ENCODE measurements at regions of chr10 and their contacts with region 1.

Region 1: GRCh38 chr10:124916585-124917427 is 25.1 kb upstream of the ZRANB1 start:
- DNase-seq: peak; percentile 96 to 97 (median 96)
- H3K4me3 ChIP-seq: peak overlapping the region; percentile 73 to 93 (median 86)
- H3K4me3 Mint-ChIP-seq: peak overlapping the region; percentile 72 to 91
- H3K27ac ChIP-seq: peak overlapping the region; percentile 56 to 85
- H3K27ac Mint-ChIP-seq: peak overlapping the region; percentile 82 to 89 (median 85)
- H3K4me1 ChIP-seq: peaks cover 26 to 31% of the 10 kb centered on the region in 2 donors
- H3K4me1 Mint-ChIP-seq: peaks cover 41% of the 10 kb centered on the region
- H3K27me3 ChIP-seq: no peaks in the 10 kb centered on the region
- H3K27me3 Mint-ChIP-seq: peaks cover 0 to 2% (median 0%) of the 10 kb centered on the region in 3 donors
- CTCF ChIP-seq: no peak

Region 2: GRCh38 chr10:124647421-124648130 is 269.2 kb before region 1 on chr10:
- intact Hi-C with region 1: loop called in 1 of 2 experiments (anchors 10 kb)
- DNase-seq: peak; percentile 92 to 95 (median 94)
- H3K4me3 ChIP-seq: peak overlapping the region in 2 of 3 experiments; percentile 10 to 64
- H3K4me3 Mint-ChIP-seq: peak overlapping the region; percentile 52 to 87
- H3K27ac ChIP-seq: peak overlapping the region; percentile 85 to 92
- H3K27ac Mint-ChIP-seq: peak overlapping the region; percentile 95 to 98 (median 96)
- H3K4me1 ChIP-seq: peaks cover 91 to 100% of the 10 kb centered on the region in 2 donors
- H3K4me1 Mint-ChIP-seq: peaks cover 94% of the 10 kb centered on the region
- H3K27me3 ChIP-seq: no peaks in the 10 kb centered on the region
- H3K27me3 Mint-ChIP-seq: no peaks in the 10 kb centered on the region
- CTCF ChIP-seq: peak; percentile 50

Region 3: GRCh38 chr10:124802313-124802675 is 114.5 kb before region 1 on chr10:
- intact Hi-C with region 1: loop called (anchors 10 kb)
- DNase-seq: peak; percentile 72 to 87 (median 74)
- H3K4me3 ChIP-seq: peak overlapping the region; percentile 83 to 95 (median 85)
- H3K4me3 Mint-ChIP-seq: peak overlapping the region; percentile 93 to 95
- H3K27ac ChIP-seq: peak overlapping the region; percentile 96 to 99
- H3K27ac Mint-ChIP-seq: peak overlapping the region; percentile 93 to 98 (median 96)
- H3K4me1 ChIP-seq: peaks cover 14 to 17% of the 10 kb centered on the region in 2 donors
- H3K4me1 Mint-ChIP-seq: peaks cover 9% of the 10 kb centered on the region
- H3K27me3 ChIP-seq: no peaks in the 10 kb centered on the region
- H3K27me3 Mint-ChIP-seq: peaks cover 0 to 12% (median 1%) of the 10 kb centered on the region in 3 donors
- CTCF ChIP-seq: no peak

Region 4: GRCh38 chr10:125060826-125061556 is 144.2 kb after region 1 on chr10:
- intact Hi-C with region 1: loop called in 1 of 2 experiments (anchors 10 kb)
- DNase-seq: peak; percentile 64 to 78 (median 72)
- H3K4me3 ChIP-seq: peak overlapping the region in 1 of 3 experiments; percentile 58
- H3K4me3 Mint-ChIP-seq: peak overlapping the region in 1 of 2 donors; percentile 82
- H3K27ac ChIP-seq: peak overlapping the region; percentile 41 to 62
- H3K27ac Mint-ChIP-seq: peak overlapping the region; percentile 74 to 92 (median 90)
- H3K4me1 ChIP-seq: peaks cover 72 to 87% of the 10 kb centered on the region in 2 donors
- H3K4me1 Mint-ChIP-seq: peaks cover 81% of the 10 kb centered on the region
- H3K27me3 ChIP-seq: no peaks in the 10 kb centered on the region
- H3K27me3 Mint-ChIP-seq: peaks cover 0 to 6% (median 2%) of the 10 kb centered on the region in 3 donors
- CTCF ChIP-seq: peak; percentile 87

Region 5: GRCh38 chr10:125719146-125720001 is 802.6 kb after region 1 on chr10 and contains the start of gene EDRF1:
- intact Hi-C with region 1: loop called (anchors 5 to 10 kb)
- DNase-seq: peak; percentile 98 to 99 (median 98)
- H3K4me3 ChIP-seq: peak within 1 kb of the TSS; percentile 86 to 99 (median 92)
- H3K4me3 Mint-ChIP-seq: peak within 1 kb of the TSS; percentile 98
- H3K27ac ChIP-seq: peak within 1 kb of the TSS; percentile 78 to 99
- H3K27ac Mint-ChIP-seq: peak within 1 kb of the TSS; percentile 92 to 98 (median 96)
- H3K4me1 ChIP-seq: peaks cover 14 to 25% of the 10 kb centered on the region in 2 donors
- H3K4me1 Mint-ChIP-seq: peaks cover 15% of the 10 kb centered on the region
- H3K27me3 ChIP-seq: no peaks in the 10 kb centered on the region
- H3K27me3 Mint-ChIP-seq: peaks cover 0 to 2% (median 0%) of the 10 kb centered on the region in 3 donors
- CTCF ChIP-seq: no peak
- polyA plus RNA-seq, gene EDRF1: 4.6 to 21.4 (median 5.3) TPM

Measured in CD14-positive monocyte (primary cell).